ENCODE measurements at regions of chr2 and their contacts with region 1.

Region 1: GRCh38 chr2:28566521-28567041 is 70.7 kb downstream of the PLB1 start:
- DNase-seq: peak; percentile 60
- ATAC-seq: peak; percentile 94
- H3K4me3 ChIP-seq: peak overlapping the region; percentile 46 to 64
- H3K27ac ChIP-seq: no peak overlapping the region
- H3K4me1 ChIP-seq: peaks cover 0 to 11% of the 10 kb centered on the region in 2 experiments; a peak in 3 of 4 replicates
- H3K27me3 ChIP-seq: no peaks in the 10 kb centered on the region
- CTCF ChIP-seq: peak; percentile 97 to 99 (median 98)
- POLR2A ChIP-seq: no peak
- RAD21 ChIP-seq: peak; percentile 95

Region 2: GRCh38 chr2:28583899-28584553 is 17.4 kb after region 1 on chr2:
- CTCF ChIA-PET with region 1: interaction called, 10 read pairs
- POLR2A ChIA-PET with region 1: interaction called, 3 read pairs
- RAD21 ChIA-PET with region 1: interaction called in 1 of 2 experiments, 5 read pairs
- intact Hi-C with region 1: no loop called
- DNase-seq: peak; percentile 80
- ATAC-seq: peak; percentile 89
- H3K4me3 ChIP-seq: peak overlapping the region; percentile 21 to 49
- H3K27ac ChIP-seq: peak overlapping the region; percentile 63
- H3K4me1 ChIP-seq: peaks cover 17 to 51% of the 10 kb centered on the region in 2 experiments
- H3K27me3 ChIP-seq: no peaks in the 10 kb centered on the region
- CTCF ChIP-seq: no peak
- POLR2A ChIP-seq: no peak
- RAD21 ChIP-seq: 0 out of 2 replicates have a peak, but pooled peaks have one; percentile 17

Region 3: DNA sequence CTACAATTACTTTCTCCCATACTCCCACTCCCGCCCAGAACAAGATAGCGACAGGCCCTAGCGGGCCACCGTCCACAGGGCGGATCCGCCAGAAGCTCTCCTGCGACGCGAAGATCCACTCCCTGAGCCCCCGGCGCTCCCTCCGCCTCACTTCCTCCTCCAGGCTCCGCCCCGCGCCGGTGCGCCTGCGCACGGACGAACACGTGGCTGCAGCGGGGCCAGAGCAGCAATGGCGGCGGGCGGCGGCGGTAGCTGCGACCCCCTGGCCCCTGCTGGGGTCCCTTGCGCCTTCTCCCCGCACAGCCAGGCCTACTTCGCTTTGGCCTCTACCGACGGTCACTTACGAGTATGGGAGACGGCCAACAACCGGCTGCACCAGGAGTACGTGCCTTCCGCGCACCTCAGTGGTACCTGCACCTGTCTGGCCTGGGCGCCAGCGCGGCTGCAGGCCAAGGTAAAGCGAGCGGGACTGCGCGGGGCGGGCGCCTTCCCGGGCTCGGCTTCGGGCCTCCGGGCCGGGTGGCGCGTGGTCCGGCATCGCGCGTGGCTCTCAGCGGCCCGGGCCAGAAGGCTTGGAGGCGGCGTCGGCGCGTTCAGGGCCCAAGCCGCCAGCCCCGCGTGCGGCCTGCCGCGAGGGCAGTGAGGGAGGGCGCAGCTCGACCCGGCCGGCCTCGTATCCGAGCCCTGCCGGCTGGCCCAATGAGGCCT is 328.0 kb after region 1 on chr2 and contains the start of gene WDR43:
- CTCF ChIA-PET with region 1: no interaction called
- POLR2A ChIA-PET with region 1: no interaction called
- RAD21 ChIA-PET with region 1: no interaction called
- intact Hi-C with region 1: loop called (anchors 1 kb)
- DNase-seq: peak; percentile 98
- ATAC-seq: peak; percentile 90
- H3K4me3 ChIP-seq: peak within 1 kb of the TSS; percentile 67 to 98
- H3K27ac ChIP-seq: peak within 1 kb of the TSS; percentile 93
- H3K4me1 ChIP-seq: peaks cover 15 to 29% of the 10 kb centered on the region in 2 experiments
- H3K27me3 ChIP-seq: peaks cover 9% of the 10 kb centered on the region; the same call in 1 of the 2 replicates
- CTCF ChIP-seq: no peak
- POLR2A ChIP-seq: peak; percentile 73
- RAD21 ChIP-seq: no peak
- total RNA-seq, gene WDR43: 119 TPM

Measured in HCT116 (cell line).